ENCODE measurements at regions of chr17 and their contacts with region 1.

Region 1: DNA sequence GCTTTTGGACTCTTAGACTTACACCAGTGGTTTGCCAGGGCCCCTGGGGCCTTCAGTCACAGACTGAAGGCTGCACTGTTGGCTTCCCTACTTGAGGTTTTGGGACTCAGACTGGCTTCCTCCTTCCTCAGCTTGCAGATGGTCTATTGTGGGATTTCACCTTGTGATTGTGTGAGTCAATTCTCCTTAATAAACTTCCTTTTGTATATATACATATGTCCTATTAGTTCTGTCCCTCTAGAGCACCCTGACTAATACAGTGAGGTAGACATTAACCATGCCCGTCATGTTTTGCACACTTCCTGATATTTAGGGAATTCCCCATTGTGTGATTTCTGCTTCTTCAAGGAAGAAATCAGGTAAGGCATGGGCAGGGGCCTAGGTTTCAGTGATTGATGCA is 147.8 kb upstream of the CA10 start:
- DNase-seq: no peak
- H3K4me3 ChIP-seq: no peak overlapping the region
- CTCF ChIP-seq: no peak
- POLR2A ChIP-seq: no peak

Region 2: GRCh38 chr17:53548252-53548651 is 1241.9 kb after region 1 on chr17:
- intact Hi-C with region 1: loop called (anchors 5 kb)
- DNase-seq: no peak
- H3K4me3 ChIP-seq: no peak overlapping the region
- CTCF ChIP-seq: no peak
- POLR2A ChIP-seq: no peak